ENCODE measurements at regions of chr5 and their contacts with region 1.

Region 1: DNA sequence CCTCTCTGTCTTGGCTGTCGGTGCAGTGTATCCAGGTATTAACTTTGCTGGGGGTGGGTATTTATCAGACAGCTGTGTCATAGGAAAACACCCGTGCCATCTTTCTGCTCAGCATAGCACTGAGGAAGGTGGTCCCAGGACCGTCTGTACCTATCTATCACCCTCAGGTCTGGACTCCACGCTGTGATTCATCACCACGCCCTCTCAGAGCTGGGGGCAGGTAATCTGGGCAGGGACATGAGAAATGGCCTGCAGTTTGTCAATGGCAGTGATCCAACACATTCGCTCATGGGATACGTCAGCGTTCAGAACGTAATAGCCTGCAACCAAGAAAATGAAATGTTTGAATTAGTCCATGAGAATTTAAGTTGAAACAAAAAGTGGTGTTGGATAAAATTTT is 151.6 kb upstream of the MAP1B start:
- DNase-seq: no peak
- H3K4me3 ChIP-seq: no peak overlapping the region
- H3K27ac ChIP-seq: no peak overlapping the region
- H3K4me1 ChIP-seq: peaks cover 0 to 4% of the 10 kb centered on the region in 2 donors
- H3K27me3 ChIP-seq: no peaks in the 10 kb centered on the region
- CTCF ChIP-seq: no peak
- POLR2A ChIP-seq: no peak

Region 2: GRCh38 chr5:71740015-71740753 is 215.5 kb before region 1 on chr5:
- intact Hi-C with region 1: no loop called
- DNase-seq: no peak
- H3K4me3 ChIP-seq: no peak overlapping the region
- H3K27ac ChIP-seq: no peak overlapping the region
- H3K4me1 ChIP-seq: peaks cover 12 to 14% of the 10 kb centered on the region in 2 donors
- H3K27me3 ChIP-seq: no peaks in the 10 kb centered on the region
- CTCF ChIP-seq: no peak
- POLR2A ChIP-seq: no peak

Region 3: DNA sequence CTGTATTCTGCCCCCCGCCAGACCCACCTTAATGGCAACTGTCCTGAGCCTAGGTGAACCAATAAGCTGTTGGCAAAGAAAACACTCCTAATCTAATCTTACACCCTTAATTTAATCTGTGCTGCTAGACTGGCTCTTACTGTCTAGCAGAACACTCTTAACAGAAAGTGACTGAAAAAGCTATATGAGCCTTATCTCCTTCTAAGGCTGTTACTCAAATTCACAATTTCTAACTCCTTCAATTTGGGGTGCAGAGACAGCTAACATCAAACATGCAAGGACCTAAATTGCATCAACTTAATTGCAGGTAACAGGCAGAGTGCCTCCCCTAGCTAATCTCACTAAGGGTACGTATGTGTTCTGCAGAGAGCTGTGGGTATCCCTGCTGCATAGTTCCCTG is 102.1 kb after region 1 on chr5:
- intact Hi-C with region 1: loop called (anchors 10 kb)
- DNase-seq: no peak
- H3K4me3 ChIP-seq: no peak overlapping the region
- H3K27ac ChIP-seq: no peak overlapping the region
- H3K4me1 ChIP-seq: no peaks in the 10 kb centered on the region
- H3K27me3 ChIP-seq: no peaks in the 10 kb centered on the region
- CTCF ChIP-seq: no peak
- POLR2A ChIP-seq: no peak